ENCODE measurements at regions of chr14 and their contacts with region 1.

Region 1: DNA sequence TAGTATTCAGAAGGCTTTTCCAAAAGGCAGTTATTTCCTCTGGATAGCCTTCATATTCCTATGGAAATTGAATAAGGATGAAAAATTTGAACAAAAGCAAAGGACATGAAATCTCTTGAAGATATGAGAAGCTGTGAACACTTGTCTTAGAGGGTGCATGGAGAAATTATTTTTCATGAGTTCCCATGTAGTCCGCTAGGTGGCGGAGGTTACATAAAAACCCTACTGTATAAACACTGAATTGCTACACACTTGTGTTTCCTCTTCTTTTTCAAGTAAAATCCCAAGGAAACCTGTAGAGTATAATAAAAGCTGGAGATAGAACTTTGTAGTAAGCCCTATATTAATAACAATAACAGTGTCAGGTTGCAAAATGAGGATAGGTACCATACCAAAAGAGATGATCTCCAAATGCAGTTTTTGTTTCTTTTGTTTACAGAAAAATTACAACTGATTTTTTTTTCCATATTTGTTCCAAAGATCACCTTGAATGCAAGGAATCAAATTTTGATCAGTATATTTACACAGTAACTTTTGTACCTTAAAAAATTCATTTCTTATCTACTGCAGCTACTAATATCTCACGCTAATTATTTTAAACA is 37.8 kb upstream of the OR4E1 start:
- DNase-seq: peak; percentile 57
- H3K4me3 Mint-ChIP-seq: peak overlapping the region; percentile 67
- H3K27ac Mint-ChIP-seq: peak overlapping the region; percentile 68
- H3K4me1 Mint-ChIP-seq: peaks cover 5% of the 10 kb centered on the region
- H3K27me3 Mint-ChIP-seq: peaks cover 2% of the 10 kb centered on the region

Region 2: GRCh38 chr14:21723431-21724045 is 12.1 kb after region 1 on chr14:
- CTCF ChIA-PET with region 1: interaction called, 40 read pairs
- intact Hi-C with region 1: no loop called
- DNase-seq: peak; percentile 68
- H3K4me3 Mint-ChIP-seq: peak overlapping the region; percentile 71
- H3K27ac Mint-ChIP-seq: peak overlapping the region; percentile 71
- H3K4me1 Mint-ChIP-seq: no peaks in the 10 kb centered on the region
- H3K27me3 Mint-ChIP-seq: peaks cover 12% of the 10 kb centered on the region

Measured in activated naive CD4-positive, alpha-beta T cell treated with anti-CD3 and anti-CD28 coated beads for 36 hours (primary cell).